Esophagus squamous epithelium (tissue), 5 donors: ENCODE measurements at regions of chr5 and their contacts with region 1.

Region 1: DNA sequence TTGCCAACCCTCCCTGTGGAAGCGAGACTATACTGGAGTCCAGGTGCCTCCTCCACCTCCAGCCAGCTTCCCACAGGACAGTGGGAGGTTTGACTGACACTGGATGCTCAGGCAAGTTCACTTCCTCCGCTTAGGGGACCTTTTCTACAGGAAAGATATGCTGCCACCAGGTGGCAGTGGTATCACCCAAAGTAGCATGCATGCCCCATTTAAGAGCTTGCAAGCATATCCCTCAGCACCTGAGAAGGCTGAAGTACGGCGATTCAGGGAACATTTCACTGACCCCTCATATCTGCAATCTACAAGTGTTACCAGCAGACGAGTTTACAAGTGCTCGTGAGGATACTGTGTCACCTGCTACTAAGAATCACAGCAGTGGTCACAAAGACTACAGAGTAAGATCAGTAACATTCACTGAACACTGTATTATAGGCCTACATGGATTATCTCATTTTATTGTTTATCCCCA is 75.5 kb downstream of the KLHL3 start:
- DNase-seq: peak; percentile 7
- H3K4me3 ChIP-seq: no peak overlapping the region
- H3K27ac ChIP-seq: no peak overlapping the region
- H3K4me1 ChIP-seq: peaks cover 0 to 25% (median 8%) of the 10 kb centered on the region in 3 donors
- H3K27me3 ChIP-seq: no peaks in the 10 kb centered on the region
- CTCF ChIP-seq: peak; percentile 54 to 81 (median 74)
- POLR2A ChIP-seq: no peak

Region 2: GRCh38 chr5:137375741-137376526 is 284.4 kb before region 1 on chr5:
- intact Hi-C with region 1: no loop called
- DNase-seq: no peak
- H3K4me3 ChIP-seq: no peak overlapping the region
- H3K27ac ChIP-seq: no peak overlapping the region
- H3K4me1 ChIP-seq: no peaks in the 10 kb centered on the region
- H3K27me3 ChIP-seq: peaks cover 0 to under 1% (median 0%) of the 10 kb centered on the region in 4 donors
- CTCF ChIP-seq: no peak
- POLR2A ChIP-seq: no peak

Region 3: DNA sequence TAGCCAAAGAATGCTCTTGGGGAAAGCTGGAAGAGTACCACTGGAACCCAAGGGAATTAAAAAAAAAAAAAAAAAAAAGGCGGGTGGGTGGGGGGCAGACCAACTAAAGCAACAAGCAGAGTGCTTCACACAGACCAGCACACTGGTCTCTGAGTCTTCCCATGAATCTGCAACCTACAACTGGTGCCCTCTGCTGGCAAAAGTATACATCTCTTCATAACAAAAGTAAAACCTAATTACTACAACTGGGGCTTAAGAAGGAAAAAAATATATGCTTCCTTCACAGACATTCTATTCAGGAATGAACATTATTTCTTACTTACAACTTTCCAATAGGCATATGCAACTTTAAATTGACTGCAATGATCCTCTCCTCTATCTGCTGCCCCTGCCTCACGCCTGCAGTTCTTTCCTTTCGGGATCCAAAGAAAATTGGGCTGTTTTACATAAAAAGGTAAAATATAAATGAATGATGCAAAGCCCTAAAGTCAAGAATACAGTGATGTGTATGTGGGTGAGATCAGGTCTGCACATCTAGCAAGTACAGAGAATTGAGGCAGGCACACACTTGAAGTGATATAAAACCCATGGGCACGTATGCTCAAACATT is 82.8 kb after region 1 on chr5:
- intact Hi-C with region 1: loop called (anchors 2 kb)
- DNase-seq: no peak
- H3K4me3 ChIP-seq: no peak overlapping the region
- H3K27ac ChIP-seq: no peak overlapping the region
- H3K4me1 ChIP-seq: peaks cover 0 to under 1% (median 0%) of the 10 kb centered on the region in 3 donors
- H3K27me3 ChIP-seq: no peaks in the 10 kb centered on the region
- CTCF ChIP-seq: peak in 4 of 6 experiments; percentile 46 to 68 (median 59)
- POLR2A ChIP-seq: no peak